Right ventricle myocardium inferior (tissue), 1 donor: ENCODE measurements at regions of chr7 and their contacts with region 1.

Region 1: DNA sequence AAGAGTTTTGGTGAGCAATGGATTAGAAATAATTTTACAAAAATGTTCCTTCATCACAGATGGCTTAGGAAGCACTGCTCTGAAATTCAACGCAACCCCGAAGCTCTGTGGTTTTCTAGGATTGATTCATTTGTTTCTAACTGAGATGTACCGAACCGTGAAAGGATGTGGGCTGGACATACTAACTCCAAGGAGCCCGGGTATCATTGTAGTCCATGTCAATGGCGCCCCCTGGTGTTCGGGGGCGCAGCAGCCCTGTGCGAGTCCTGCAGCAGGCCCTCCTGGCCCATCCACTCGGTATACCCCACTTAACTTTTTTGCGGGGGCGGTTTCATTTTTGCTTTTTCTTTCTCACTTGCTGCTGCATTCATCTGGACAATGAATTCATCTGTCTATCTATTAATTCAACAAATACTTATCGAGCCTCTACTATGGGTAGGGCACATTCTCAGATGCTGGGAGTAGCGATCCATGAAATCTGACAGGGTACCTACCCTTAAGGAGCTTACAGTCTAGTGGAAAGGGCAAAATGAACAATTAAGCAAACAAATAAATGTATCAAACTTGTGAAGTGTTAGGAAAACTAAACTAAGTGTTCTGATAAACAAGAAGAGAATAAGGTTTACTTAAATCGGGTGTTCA is 25.2 kb upstream of the ITPRID1 start:
- DNase-seq: peak; percentile 74
- ATAC-seq: no peak

Region 2: GRCh38 chr7:31134246-31135188 is 354.2 kb before region 1 on chr7:
- intact Hi-C with region 1: loop called (anchors 10 kb)
- DNase-seq: peak; percentile 72
- ATAC-seq: peak; percentile 95

Region 3: GRCh38 chr7:32239764-32240163 is 751.1 kb after region 1 on chr7:
- intact Hi-C with region 1: no loop called
- DNase-seq: no peak
- ATAC-seq: no peak